ENCODE measurements at regions of chr10 and their contacts with region 1.

Region 1: GRCh38 chr10:70461215-70461986 is 17.2 kb upstream of the PALD1 start:
- DNase-seq: no peak
- H3K4me3 ChIP-seq: no peak overlapping the region
- H3K27ac ChIP-seq: peak overlapping the region in 1 of 2 donors; percentile 33
- H3K4me1 ChIP-seq: peaks cover 5 to 18% of the 10 kb centered on the region in 2 donors
- H3K27me3 ChIP-seq: no peaks in the 10 kb centered on the region
- CTCF ChIP-seq: peak; percentile 79 to 92 (median 88)

Region 2: DNA sequence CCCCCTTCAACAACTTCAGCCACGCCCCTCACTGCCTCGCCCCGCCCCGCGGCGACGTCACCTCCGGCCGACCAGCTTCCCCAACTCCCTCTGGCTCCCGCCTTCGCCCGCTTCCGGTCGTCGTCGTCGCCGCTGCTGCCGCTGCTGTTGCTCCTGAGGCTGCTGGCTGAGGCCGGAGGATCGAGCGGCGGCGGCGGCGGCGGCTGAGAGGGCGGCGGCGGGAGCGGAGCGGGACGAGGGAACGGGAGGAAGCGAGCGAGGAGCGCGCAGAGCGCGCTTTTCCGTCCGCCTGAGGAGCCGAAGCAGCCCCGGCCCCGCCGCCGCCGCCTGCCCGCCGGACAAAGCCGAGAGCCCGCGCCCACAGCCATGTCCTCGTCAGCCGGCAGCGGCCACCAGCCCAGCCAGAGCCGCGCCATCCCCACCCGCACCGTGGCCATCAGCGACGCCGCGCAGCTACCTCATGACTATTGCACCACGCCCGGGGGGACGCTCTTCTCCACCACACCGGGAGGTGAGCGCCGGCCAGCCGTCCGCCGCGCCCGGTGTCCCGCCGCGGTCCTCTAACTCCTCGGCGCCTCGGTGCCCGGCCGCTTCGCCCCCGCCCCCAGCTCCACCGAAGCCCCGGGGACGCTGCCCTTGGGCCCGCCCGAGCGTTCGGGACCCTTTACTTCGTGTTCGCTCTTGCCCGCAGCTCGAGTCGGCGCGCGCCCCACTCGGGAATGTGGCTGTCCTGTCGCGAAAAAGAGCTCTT is 57.2 kb before region 1 on chr10 and contains the start of gene EIF4EBP2:
- intact Hi-C with region 1: loop called (anchors 1 kb)
- DNase-seq: peak; percentile 86 to 99
- H3K4me3 ChIP-seq: peak within 1 kb of the TSS; percentile 84 to 96
- H3K27ac ChIP-seq: peak within 1 kb of the TSS; percentile 98 to 100
- H3K4me1 ChIP-seq: peaks cover 6 to 25% of the 10 kb centered on the region in 2 donors
- H3K27me3 ChIP-seq: no peaks in the 10 kb centered on the region
- CTCF ChIP-seq: no peak
- total RNA-seq, gene EIF4EBP2: 35.4 TPM

Region 3: GRCh38 chr10:70478191-70479164 is 17.1 kb after region 1 on chr10 and contains the start of gene PALD1:
- intact Hi-C with region 1: loop called (anchors 2 kb)
- DNase-seq: peak in 1 of 2 donors; percentile 83
- H3K4me3 ChIP-seq: peak within 1 kb of the TSS; percentile 69 to 86
- H3K27ac ChIP-seq: peak within 1 kb of the TSS; percentile 81 to 85
- H3K4me1 ChIP-seq: peaks cover 21 to 33% of the 10 kb centered on the region in 2 donors
- H3K27me3 ChIP-seq: no peaks in the 10 kb centered on the region
- CTCF ChIP-seq: peak in 2 of 3 experiments; percentile 18 to 45
- total RNA-seq, gene PALD1: 21.7 TPM

Region 4: GRCh38 chr10:70758757-70759514 is 297.5 kb after region 1 on chr10:
- intact Hi-C with region 1: loop called (anchors 1 kb)
- DNase-seq: peak in 1 of 2 donors; percentile 75
- H3K4me3 ChIP-seq: no peak overlapping the region
- H3K27ac ChIP-seq: no peak overlapping the region
- H3K4me1 ChIP-seq: no peaks in the 10 kb centered on the region
- H3K27me3 ChIP-seq: no peaks in the 10 kb centered on the region
- CTCF ChIP-seq: peak; percentile 44 to 72 (median 64)

Region 5: GRCh38 chr10:70887804-70888800 is 426.7 kb after region 1 on chr10 and contains the start of gene PCBD1:
- intact Hi-C with region 1: loop called (anchors 5 kb)
- DNase-seq: peak; percentile 48 to 93
- H3K4me3 ChIP-seq: peak within 1 kb of the TSS; percentile 79 to 80
- H3K27ac ChIP-seq: peak within 1 kb of the TSS; percentile 92 to 96
- H3K4me1 ChIP-seq: peaks cover 0 to 3% of the 10 kb centered on the region in 2 donors
- H3K27me3 ChIP-seq: no peaks in the 10 kb centered on the region
- CTCF ChIP-seq: peak in 1 of 3 experiments; percentile 9
- total RNA-seq, gene PCBD1: 45.8 TPM